ENCODE measurements at regions of chr7 and their contacts with region 1.

Region 1: DNA sequence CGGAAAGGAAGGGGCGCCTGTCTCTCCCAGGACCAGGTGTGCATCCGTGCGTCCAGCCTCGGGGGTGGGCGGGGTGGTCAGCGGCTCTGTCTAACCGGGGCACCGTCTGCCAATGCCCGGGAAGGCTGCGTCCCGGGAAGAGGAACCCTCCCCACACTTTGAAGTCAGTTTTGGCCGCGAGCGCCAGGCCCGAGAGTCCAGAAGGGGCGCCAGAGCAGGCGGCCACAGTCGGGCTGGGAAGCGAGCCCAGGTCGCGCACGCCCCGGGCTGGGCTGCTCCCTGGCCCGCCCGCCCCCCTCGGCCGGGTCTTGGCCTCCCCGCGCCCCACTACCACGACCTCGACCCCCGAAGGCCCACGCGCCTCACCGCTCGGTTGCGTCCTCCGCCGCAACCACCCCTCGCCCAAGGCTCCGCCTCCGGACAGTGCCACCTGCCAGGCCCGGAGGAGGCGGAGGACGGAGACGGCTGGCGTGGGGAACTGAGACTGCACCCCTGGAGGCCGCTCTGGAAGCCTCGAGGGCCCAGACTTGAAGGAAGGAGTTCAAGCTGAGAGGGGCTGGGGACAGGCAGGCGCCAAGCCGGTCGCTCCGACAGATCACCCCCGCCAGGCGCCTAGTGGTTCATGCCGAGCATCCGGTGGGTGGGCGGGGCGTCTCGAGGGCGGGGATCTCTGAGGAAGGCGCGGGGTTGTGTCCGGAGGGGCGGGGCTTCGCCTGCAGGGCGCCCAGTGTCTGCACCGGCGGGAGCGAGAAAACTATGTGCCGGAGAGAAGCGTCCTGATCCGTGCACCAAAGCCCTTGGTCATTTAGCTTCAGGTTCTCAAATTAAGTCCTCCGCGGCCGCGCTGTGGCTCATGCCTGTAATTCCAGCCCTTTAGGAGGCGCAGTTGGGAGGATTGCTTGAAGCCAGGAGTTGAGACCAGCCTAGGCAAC is at the start of gene BRAT1:
- DNase-seq: peak; percentile 93
- H3K4me3 ChIP-seq: peak within 1 kb of the TSS; percentile 31 to 81 (median 46)
- H3K27ac ChIP-seq: peak within 1 kb of the TSS; percentile 94
- H3K4me1 ChIP-seq: peaks cover 9% of the 10 kb centered on the region
- H3K27me3 ChIP-seq: no peaks in the 10 kb centered on the region
- CTCF ChIP-seq: peak; percentile 20 to 69
- POLR2A ChIP-seq: peak; percentile 55
- total RNA-seq, gene BRAT1: 31.6 and 32.2 TPM in 2 replicates

Region 2: GRCh38 chr7:2451171-2452073 is 104.0 kb before region 1 on chr7:
- CTCF ChIA-PET with region 1: interaction called, 4 read pairs
- POLR2A ChIA-PET with region 1: no interaction called
- dilution Hi-C with region 1: no loop called
- intact Hi-C with region 1: loop called (anchors 5 kb)
- DNase-seq: peak; percentile 63
- H3K4me3 ChIP-seq: no peak overlapping the region
- H3K27ac ChIP-seq: no peak overlapping the region
- H3K4me1 ChIP-seq: peaks cover 5% of the 10 kb centered on the region
- H3K27me3 ChIP-seq: no peaks in the 10 kb centered on the region
- CTCF ChIP-seq: peak; percentile 95 to 97
- POLR2A ChIP-seq: no peak

Region 3: DNA sequence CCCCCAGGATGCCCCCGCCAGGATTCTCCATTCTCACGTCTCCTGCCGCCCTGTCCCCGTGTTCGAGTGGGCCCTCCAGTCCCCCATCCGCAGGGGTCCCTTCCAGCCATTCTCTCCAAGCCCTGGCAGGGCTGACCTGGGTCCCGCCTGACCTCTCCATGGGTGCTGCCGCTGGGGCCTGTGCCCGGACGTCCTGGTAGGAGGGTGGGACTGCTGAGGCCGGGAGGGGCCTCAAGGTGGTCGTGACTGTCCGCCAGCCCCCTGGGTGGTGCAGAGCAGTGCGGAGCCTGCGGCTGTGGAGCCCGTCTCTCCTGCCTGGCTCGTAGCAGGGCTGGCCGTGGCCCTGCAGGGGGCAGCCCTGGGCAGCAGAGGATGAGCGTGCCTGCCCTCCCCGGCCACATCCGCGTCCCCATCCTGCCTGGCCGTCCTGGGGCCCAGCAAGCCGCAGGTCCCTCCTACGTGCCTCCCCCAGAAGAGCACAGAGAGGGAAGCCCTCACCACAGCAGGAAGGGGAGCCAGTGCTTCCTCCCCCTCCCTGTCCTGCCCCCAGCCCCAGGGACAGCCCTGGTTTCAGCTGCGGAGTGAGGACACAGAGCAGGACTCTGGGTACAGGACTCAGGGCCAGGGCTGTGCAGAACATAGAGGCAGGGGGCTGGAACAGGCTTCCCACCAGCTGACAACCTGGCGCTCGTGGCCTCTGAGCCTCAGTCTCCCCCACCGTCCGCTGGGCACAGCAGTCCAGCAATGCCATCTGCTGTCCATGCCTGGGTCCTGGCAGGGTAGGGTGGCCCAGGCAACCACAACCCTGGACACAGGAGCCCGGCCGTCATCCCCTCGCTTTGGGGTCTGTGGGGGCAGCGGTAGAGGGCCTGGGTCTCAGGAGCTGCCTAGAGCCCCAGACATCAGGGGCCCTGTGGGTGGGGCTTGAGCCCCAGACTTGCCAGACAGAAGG is 77.7 kb before region 1 on chr7:
- CTCF ChIA-PET with region 1: interaction called, 8 read pairs
- POLR2A ChIA-PET with region 1: no interaction called
- dilution Hi-C with region 1: no loop called
- intact Hi-C with region 1: loop called (anchors 1 kb)
- DNase-seq: peak; percentile 53
- H3K4me3 ChIP-seq: no peak overlapping the region
- H3K27ac ChIP-seq: no peak overlapping the region
- H3K4me1 ChIP-seq: no peaks in the 10 kb centered on the region
- H3K27me3 ChIP-seq: peaks cover 0 to 4% of the 10 kb centered on the region in 2 experiments
- CTCF ChIP-seq: peak; percentile 81 to 95
- POLR2A ChIP-seq: no peak

Region 4: DNA sequence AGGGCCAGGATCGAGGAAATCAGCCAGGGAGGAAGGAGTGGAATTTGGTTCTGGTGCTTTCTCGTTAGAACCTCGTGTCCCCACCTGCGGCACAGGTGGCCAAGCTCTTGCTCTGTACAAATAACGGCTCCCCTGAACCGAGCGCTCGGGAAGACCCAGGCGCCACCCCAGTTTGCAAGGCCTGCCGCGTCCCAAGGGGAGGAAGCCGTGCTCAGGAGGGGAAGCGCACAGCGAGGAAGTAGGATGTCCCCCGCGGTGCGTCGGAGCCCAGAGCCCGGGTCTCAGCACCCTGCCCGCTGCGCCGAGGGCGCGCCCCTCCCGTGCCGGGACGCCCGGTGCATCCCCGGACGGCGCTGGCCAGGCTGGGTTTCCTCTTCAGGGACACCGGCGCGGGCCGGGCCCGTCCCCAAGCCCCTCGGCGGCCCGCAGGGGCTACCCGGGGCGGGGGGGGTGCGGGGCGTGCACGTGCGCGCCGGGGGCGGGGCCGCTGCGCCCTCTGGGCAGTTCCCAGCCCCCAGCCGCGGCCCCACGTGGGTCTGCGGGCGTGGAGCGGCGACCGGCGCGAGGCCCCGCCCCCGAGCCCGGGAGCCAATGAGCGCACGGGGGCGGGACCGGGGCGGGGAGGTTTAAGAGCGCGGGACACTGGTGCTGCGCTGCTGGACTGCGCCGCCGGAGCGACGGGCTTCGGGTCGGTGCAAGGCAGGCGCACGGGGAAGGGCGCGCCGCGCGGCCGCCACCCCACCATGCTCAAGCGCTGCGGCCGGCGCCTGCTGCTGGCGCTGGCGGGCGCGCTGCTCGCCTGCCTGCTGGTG is 36.1 kb before region 1 on chr7 and contains the start of gene LFNG:
- CTCF ChIA-PET with region 1: interaction called, 3 read pairs
- POLR2A ChIA-PET with region 1: no interaction called
- dilution Hi-C with region 1: no loop called
- intact Hi-C with region 1: loop called (anchors 2 kb)
- DNase-seq: peak; percentile 82
- H3K4me3 ChIP-seq: peak within 1 kb of the TSS; percentile 17 to 63 (median 43)
- H3K27ac ChIP-seq: no peak within 1 kb of the TSS
- H3K4me1 ChIP-seq: peaks cover 38% of the 10 kb centered on the region
- H3K27me3 ChIP-seq: no peaks in the 10 kb centered on the region
- CTCF ChIP-seq: no peak
- POLR2A ChIP-seq: peak; percentile 98
- total RNA-seq, gene LFNG: 12.6 and 15.1 TPM in 2 replicates

Region 5: GRCh38 chr7:2529161-2530070 is 26.0 kb before region 1 on chr7:
- CTCF ChIA-PET with region 1: interaction called, 3 read pairs
- POLR2A ChIA-PET with region 1: no interaction called
- dilution Hi-C with region 1: no loop called
- intact Hi-C with region 1: loop called (anchors 2 kb)
- DNase-seq: peak; percentile 44
- H3K4me3 ChIP-seq: no peak overlapping the region
- H3K27ac ChIP-seq: peak overlapping the region; percentile 18
- H3K4me1 ChIP-seq: peaks cover 32% of the 10 kb centered on the region
- H3K27me3 ChIP-seq: no peaks in the 10 kb centered on the region
- CTCF ChIP-seq: no peak
- POLR2A ChIP-seq: no peak

Region 6: GRCh38 chr7:2632733-2633537 is 77.5 kb after region 1 on chr7:
- CTCF ChIA-PET with region 1: no interaction called
- POLR2A ChIA-PET with region 1: no interaction called
- dilution Hi-C with region 1: no loop called
- intact Hi-C with region 1: loop called (anchors 2 kb)
- DNase-seq: peak; percentile 61
- H3K4me3 ChIP-seq: peak overlapping the region; percentile 80 to 97 (median 83)
- H3K27ac ChIP-seq: peak overlapping the region; percentile 90
- H3K4me1 ChIP-seq: peaks cover 31% of the 10 kb centered on the region
- H3K27me3 ChIP-seq: no peaks in the 10 kb centered on the region
- CTCF ChIP-seq: no peak
- POLR2A ChIP-seq: no peak

Region 7: GRCh38 chr7:2660585-2661408 is 105.4 kb after region 1 on chr7:
- CTCF ChIA-PET with region 1: no interaction called
- POLR2A ChIA-PET with region 1: no interaction called
- dilution Hi-C with region 1: no loop called
- intact Hi-C with region 1: loop called (anchors 5 kb)
- DNase-seq: no peak
- H3K4me3 ChIP-seq: no peak overlapping the region
- H3K27ac ChIP-seq: no peak overlapping the region
- H3K4me1 ChIP-seq: peaks cover 14% of the 10 kb centered on the region
- H3K27me3 ChIP-seq: no peaks in the 10 kb centered on the region
- CTCF ChIP-seq: peak; percentile 28 to 34
- POLR2A ChIP-seq: no peak

Measured in endothelial cell of umbilical vein (primary cell).